Activated CD4-positive, alpha-beta T cell treated with anti-CD3 and anti-CD28 coated beads for 36 hours (primary cell): ENCODE measurements at regions of chr2 and their contacts with region 1.

Region 1: DNA sequence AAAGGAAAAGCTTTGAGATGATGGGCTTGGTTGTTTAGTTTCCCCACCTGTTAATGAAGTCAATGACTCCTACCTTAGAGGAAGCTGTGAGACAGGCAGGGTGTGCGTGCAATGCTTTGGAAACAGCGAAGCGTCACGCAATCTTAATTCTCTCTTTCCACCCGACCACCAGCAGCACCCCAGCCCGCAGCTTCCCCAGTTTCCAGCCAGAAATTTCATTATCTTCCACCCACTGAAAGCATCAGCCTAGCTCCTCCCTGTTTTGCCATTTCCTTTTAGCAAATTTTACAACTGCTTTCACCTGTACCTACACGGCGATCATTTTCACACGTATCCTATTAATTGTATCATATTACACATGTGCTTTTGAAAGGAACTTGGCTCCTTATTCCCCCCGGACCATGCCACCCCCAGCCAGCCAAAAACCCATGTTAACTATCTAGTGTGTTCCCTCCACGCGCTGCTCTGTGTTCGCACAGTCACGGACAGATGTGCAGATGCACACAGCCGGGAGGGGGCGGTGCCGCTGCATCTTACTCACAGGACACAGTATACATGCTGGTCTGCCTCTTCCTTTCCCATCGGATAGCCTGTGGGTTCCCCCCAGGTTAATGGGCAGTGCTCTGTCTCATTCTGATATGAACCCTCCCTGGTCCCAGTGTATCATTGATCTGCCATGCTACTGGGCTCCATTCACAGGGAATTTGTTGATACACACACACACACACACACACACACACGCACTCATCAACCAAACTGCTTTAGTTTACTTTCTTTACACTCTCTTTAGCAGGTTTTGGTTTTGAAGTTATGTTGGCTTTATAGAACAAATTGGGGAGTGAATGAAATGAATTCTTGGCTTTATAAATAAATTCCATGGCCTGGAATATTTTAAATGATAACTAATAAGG is 22.4 kb downstream of the CYP27C1 start:
- DNase-seq: peak; percentile 79
- ATAC-seq: peak; percentile 95
- H3K4me3 Mint-ChIP-seq: peak overlapping the region; percentile 58
- H3K27ac Mint-ChIP-seq: no peak overlapping the region
- H3K4me1 Mint-ChIP-seq: no peaks in the 10 kb centered on the region
- H3K27me3 Mint-ChIP-seq: no peaks in the 10 kb centered on the region

Region 2: GRCh38 chr2:127153691-127154158 is 44.0 kb before region 1 on chr2:
- CTCF ChIA-PET with region 1: no interaction called
- POLR2A ChIA-PET with region 1: no interaction called
- intact Hi-C with region 1: no loop called
- DNase-seq: no peak
- ATAC-seq: no peak
- H3K4me3 Mint-ChIP-seq: no peak overlapping the region
- H3K27ac Mint-ChIP-seq: no peak overlapping the region
- H3K4me1 Mint-ChIP-seq: no peaks in the 10 kb centered on the region
- H3K27me3 Mint-ChIP-seq: no peaks in the 10 kb centered on the region

Region 3: GRCh38 chr2:127649684-127650040 is 451.9 kb after region 1 on chr2:
- CTCF ChIA-PET with region 1: no interaction called
- POLR2A ChIA-PET with region 1: no interaction called
- intact Hi-C with region 1: loop called (anchors 1 to 10 kb)
- DNase-seq: peak; percentile 92
- ATAC-seq: peak; percentile 85
- H3K4me3 Mint-ChIP-seq: no peak overlapping the region
- H3K27ac Mint-ChIP-seq: no peak overlapping the region
- H3K4me1 Mint-ChIP-seq: peaks cover 10% of the 10 kb centered on the region
- H3K27me3 Mint-ChIP-seq: no peaks in the 10 kb centered on the region